ENCODE measurements at regions of chr14 and their contacts with region 1.

Region 1: GRCh38 chr14:50363714-50364111 is 33.0 kb downstream of the CDKL1 start:
- DNase-seq: peak; percentile 27
- ATAC-seq: peak; percentile 99
- H3K4me3 Mint-ChIP-seq: peak overlapping the region; percentile 84
- H3K27ac Mint-ChIP-seq: peak overlapping the region; percentile 97
- H3K4me1 Mint-ChIP-seq: peaks cover 44% of the 10 kb centered on the region
- H3K27me3 Mint-ChIP-seq: no peaks in the 10 kb centered on the region
- CTCF ChIP-seq: no peak

Region 2: DNA sequence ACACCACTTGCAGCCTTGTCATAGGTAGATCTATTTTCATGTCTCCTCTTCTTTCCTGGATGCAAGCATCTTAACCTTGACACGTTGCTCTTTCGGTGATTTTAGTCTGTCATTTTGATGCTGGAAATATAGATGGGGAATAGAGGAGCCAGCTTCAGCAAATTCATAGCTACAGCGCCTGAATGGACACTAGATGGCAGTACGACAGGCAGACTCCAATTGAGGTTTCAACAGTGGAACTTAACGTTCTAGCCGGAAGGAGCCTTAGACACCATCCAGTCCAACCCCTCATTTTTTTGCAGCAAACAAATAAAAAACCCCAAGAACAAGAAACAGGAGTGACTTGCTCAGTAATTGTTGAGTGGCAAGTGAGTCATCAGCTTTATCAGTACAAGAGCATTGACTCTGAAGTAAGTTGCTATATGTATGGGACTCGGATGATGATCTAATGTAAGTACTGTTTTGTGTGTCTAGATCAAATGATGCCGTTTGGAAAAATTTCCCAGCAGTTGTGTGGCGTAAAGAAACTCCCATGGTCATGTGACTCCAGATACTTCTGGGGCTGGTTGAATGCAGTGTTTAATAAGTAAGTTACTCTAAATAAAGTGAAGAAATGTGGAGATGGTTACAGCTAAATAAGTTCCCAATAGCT is 42.6 kb before region 1 on chr14:
- CTCF ChIA-PET with region 1: interaction called, 4 read pairs
- POLR2A ChIA-PET with region 1: interaction called, 7 read pairs
- intact Hi-C with region 1: loop called (anchors 2 kb)
- DNase-seq: no peak
- ATAC-seq: peak; percentile 94
- H3K4me3 Mint-ChIP-seq: no peak overlapping the region
- H3K27ac Mint-ChIP-seq: no peak overlapping the region
- H3K4me1 Mint-ChIP-seq: peaks cover 21% of the 10 kb centered on the region
- H3K27me3 Mint-ChIP-seq: no peaks in the 10 kb centered on the region
- CTCF ChIP-seq: peak; percentile 43

Region 3: DNA sequence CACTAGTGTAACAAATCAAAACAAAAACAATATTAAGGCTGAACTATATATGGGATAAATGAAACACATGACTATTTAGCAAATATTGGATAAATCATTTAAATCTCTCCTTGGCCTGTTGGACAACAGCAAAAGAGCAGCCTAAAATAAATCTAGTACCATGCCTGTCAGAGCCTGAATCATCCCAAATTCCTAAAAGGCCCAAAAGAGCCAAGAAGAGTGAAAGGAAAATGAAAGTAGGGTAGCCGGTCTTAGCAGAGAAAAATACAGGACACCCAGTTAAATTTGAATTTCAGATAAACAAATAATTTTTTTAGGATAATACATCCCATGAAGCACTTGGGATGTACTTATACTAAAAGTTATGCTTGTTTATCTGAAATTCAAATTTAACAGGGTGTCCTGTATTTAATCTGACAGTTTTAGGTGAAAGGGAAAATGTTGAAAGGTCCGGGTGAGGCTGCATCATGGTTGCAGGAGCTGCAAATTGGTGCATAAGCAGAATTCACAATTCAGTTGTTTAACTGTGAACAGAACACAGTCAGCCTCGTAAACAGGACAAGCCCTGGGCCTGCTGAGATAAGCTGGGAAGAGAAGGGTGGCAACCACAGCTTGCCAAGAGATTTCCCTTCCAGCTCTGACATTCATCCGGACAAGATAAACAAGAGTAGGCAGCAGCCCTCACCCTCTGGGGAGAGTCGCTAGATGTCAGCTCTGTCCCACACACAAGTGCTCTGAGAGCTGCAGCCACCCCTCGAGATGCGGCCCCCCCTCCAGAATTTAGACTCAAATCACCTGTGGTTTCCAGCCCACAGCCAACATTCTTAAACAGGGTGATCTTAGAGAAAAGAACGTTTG is 21.3 kb before region 1 on chr14:
- CTCF ChIA-PET with region 1: interaction called, 4 read pairs
- POLR2A ChIA-PET with region 1: interaction called, 9 read pairs
- intact Hi-C with region 1: loop called (anchors 1 kb)
- DNase-seq: no peak
- ATAC-seq: peak; percentile 36
- H3K4me3 Mint-ChIP-seq: no peak overlapping the region
- H3K27ac Mint-ChIP-seq: peak overlapping the region; percentile 19
- H3K4me1 Mint-ChIP-seq: peaks cover 21% of the 10 kb centered on the region
- H3K27me3 Mint-ChIP-seq: no peaks in the 10 kb centered on the region
- CTCF ChIP-seq: no peak

Measured in activated B cell treated with CpG ODN at 0.5 μM for 24 hours (primary cell).